Left ventricle myocardium inferior (tissue), 1 donor: ENCODE measurements at regions of chr3 and their contacts with region 1.

Region 1: GRCh38 chr3:72855001-72855400 is 6.8 kb upstream of the SHQ1 start:
- DNase-seq: no peak
- H3K4me3 ChIP-seq: no peak overlapping the region
- H3K27ac ChIP-seq: no peak overlapping the region
- H3K4me1 ChIP-seq: no peaks in the 10 kb centered on the region
- H3K27me3 ChIP-seq: peaks cover 10% of the 10 kb centered on the region
- CTCF ChIP-seq: no peak

Region 2: GRCh38 chr3:73086071-73086494 is 231.1 kb after region 1 on chr3:
- intact Hi-C with region 1: loop called (anchors 10 kb)
- DNase-seq: no peak
- H3K4me3 ChIP-seq: no peak overlapping the region
- H3K27ac ChIP-seq: no peak overlapping the region
- H3K4me1 ChIP-seq: no peaks in the 10 kb centered on the region
- H3K27me3 ChIP-seq: no peaks in the 10 kb centered on the region
- CTCF ChIP-seq: peak; percentile 81